ENCODE measurements at regions of chr2 and their contacts with region 1.

Region 1: DNA sequence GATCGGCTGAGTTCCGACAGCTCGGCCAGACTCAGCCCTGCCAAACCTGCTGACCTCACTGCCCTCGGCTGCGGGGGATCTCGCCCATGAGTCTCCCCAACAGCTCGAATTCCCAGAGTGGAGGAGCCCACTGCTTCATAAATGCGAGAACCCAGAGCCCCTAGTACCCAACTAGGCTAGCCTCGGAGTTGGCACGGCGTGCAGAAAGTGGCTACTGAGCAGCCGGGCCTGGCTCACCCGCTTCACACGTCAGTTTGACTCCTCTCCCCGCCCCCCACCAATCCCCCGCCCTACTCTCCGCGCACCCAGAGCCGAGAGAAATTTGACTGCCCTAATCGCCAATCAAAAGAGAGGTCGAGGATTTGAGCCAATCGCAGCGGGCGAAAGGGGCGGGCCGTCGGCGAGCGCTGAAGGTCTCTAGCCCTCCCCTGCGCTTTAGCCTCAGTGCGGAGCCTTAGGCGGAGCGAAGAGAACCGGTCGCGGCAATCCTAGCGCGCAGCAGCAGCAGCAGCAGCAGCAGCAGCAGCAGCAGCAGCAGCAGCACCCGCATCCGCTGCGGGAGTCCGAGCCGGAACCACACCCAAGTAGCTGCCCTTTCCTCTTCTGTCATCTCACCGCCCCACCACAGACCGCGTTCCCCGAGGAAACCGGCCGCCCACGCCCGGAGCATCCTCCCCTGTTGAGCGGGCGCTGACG is at the start of gene GLS:
- DNase-seq: peak; percentile 94 to 98 (median 97)
- H3K4me3 ChIP-seq: peak within 1 kb of the TSS; percentile 88 to 94
- H3K4me3 Mint-ChIP-seq: peak within 1 kb of the TSS; percentile 96 to 99 (median 98)
- H3K27ac ChIP-seq: peak within 1 kb of the TSS; percentile 93
- H3K27ac Mint-ChIP-seq: peak within 1 kb of the TSS; percentile 96 to 99 (median 99)
- H3K4me1 ChIP-seq: peaks cover 54% of the 10 kb centered on the region
- H3K4me1 Mint-ChIP-seq: peaks cover 33 to 72% (median 45%) of the 10 kb centered on the region in 4 donors
- H3K27me3 ChIP-seq: no peaks in the 10 kb centered on the region
- H3K27me3 Mint-ChIP-seq: no peaks in the 10 kb centered on the region
- total RNA-seq, gene GLS: 200 to 208 TPM

Region 2: GRCh38 chr2:190408538-190409271 is 471.8 kb before region 1 on chr2:
- CTCF ChIA-PET with region 1: no interaction called
- POLR2A ChIA-PET with region 1: interaction called, 15 read pairs
- intact Hi-C with region 1: loop called (anchors 2 kb)
- DNase-seq: peak; percentile 78 to 86 (median 84)
- H3K4me3 ChIP-seq: peak overlapping the region; percentile 67 to 78
- H3K4me3 Mint-ChIP-seq: peak overlapping the region; percentile 89 to 95 (median 92)
- H3K27ac ChIP-seq: peak overlapping the region; percentile 96
- H3K27ac Mint-ChIP-seq: peak overlapping the region; percentile 96 to 99 (median 98)
- H3K4me1 ChIP-seq: peaks cover 54% of the 10 kb centered on the region
- H3K4me1 Mint-ChIP-seq: peaks cover 37 to 52% (median 41%) of the 10 kb centered on the region in 4 donors
- H3K27me3 ChIP-seq: no peaks in the 10 kb centered on the region
- H3K27me3 Mint-ChIP-seq: no peaks in the 10 kb centered on the region

Region 3: DNA sequence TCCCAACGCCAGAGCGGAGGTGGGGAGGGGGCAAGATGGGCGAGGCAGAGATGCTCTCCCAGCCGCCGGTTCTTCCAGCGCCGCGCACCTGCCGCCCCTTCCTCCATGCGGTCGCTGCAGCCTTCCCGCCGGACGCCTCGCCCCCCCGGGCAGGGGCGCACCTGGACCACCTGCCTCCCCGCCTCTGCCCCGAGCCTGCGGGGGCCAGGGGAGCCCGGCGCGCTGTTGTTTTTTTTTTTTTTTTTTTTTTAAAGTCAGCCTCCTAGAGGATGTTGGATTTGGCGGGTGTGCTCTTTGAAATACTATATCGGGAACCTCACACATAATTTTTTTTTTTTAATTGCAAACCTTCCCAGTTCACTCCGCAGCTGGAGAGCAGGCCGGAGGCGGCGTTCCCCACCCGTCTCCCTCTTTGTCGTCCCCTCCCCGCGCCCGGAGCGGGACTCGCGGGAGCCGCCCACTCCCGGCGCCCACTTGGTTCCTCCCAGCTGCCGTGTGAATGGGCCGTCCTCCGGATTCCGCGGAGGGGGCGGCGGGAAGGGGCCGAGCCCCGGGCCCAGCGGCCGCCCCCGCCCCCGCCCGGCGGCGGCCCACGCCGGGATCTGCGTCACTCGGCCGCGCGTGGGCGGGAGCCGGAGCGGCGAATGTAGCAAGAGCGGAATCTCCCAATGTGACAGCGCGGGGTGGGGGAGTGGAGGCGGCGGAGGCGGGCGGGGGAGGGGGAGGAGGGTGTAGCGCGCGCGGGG is 232.1 kb before region 1 on chr2:
- CTCF ChIA-PET with region 1: interaction called, 3 read pairs
- POLR2A ChIA-PET with region 1: interaction called, 4 read pairs
- intact Hi-C with region 1: loop called (anchors 2 kb)
- DNase-seq: peak; percentile 91 to 94 (median 92)
- H3K4me3 ChIP-seq: peak overlapping the region; percentile 31 to 57
- H3K4me3 Mint-ChIP-seq: peak overlapping the region; percentile 78 to 91 (median 85)
- H3K27ac ChIP-seq: peak overlapping the region; percentile 72
- H3K27ac Mint-ChIP-seq: peak overlapping the region; percentile 90 to 96 (median 93)
- H3K4me1 ChIP-seq: peaks cover 38% of the 10 kb centered on the region
- H3K4me1 Mint-ChIP-seq: peaks cover 19 to 49% (median 29%) of the 10 kb centered on the region in 4 donors
- H3K27me3 ChIP-seq: no peaks in the 10 kb centered on the region
- H3K27me3 Mint-ChIP-seq: no peaks in the 10 kb centered on the region

Region 4: GRCh38 chr2:190858817-190859216 is 21.7 kb before region 1 on chr2:
- CTCF ChIA-PET with region 1: interaction called, 62 read pairs
- POLR2A ChIA-PET with region 1: interaction called, 48 read pairs
- intact Hi-C with region 1: no loop called
- DNase-seq: no peak
- H3K4me3 ChIP-seq: no peak overlapping the region
- H3K4me3 Mint-ChIP-seq: no peak overlapping the region
- H3K27ac ChIP-seq: no peak overlapping the region
- H3K27ac Mint-ChIP-seq: no peak overlapping the region
- H3K4me1 ChIP-seq: peaks cover 10% of the 10 kb centered on the region
- H3K4me1 Mint-ChIP-seq: peaks cover 10 to 17% (median 17%) of the 10 kb centered on the region in 4 donors
- H3K27me3 ChIP-seq: no peaks in the 10 kb centered on the region
- H3K27me3 Mint-ChIP-seq: peaks cover 0 to 1% of the 10 kb centered on the region in 2 donors

Region 5: GRCh38 chr2:190893157-190893556 is 12.6 kb after region 1 on chr2:
- CTCF ChIA-PET with region 1: interaction called, 11 read pairs
- POLR2A ChIA-PET with region 1: interaction called, 94 read pairs
- intact Hi-C with region 1: loop called (anchors 1 kb)
- DNase-seq: no peak
- H3K4me3 ChIP-seq: no peak overlapping the region
- H3K4me3 Mint-ChIP-seq: no peak overlapping the region
- H3K27ac ChIP-seq: no peak overlapping the region
- H3K27ac Mint-ChIP-seq: peak overlapping the region in 3 of 7 donors; percentile 31 to 66 (median 39)
- H3K4me1 ChIP-seq: peaks cover 58% of the 10 kb centered on the region
- H3K4me1 Mint-ChIP-seq: peaks cover 37 to 77% (median 52%) of the 10 kb centered on the region in 4 donors
- H3K27me3 ChIP-seq: no peaks in the 10 kb centered on the region
- H3K27me3 Mint-ChIP-seq: no peaks in the 10 kb centered on the region

Region 6: DNA sequence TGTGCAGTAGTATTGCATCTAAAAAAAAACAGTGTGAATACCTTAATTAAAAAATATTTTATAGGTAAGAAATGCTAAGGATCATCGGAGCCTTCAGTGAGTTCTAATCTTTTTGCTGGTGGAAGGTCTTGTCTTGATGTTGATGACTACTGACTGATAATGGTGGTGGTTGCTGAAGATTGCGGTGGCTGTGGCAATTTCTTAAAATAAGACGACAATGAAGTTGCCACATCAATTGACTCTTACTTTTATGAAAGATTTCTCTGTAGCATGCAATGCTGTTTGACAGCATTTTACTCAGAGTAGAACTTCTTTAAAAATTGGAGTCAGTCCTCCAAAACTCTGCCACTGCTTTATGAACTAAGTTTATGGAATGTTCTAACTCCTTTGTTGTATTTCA is 36.3 kb after region 1 on chr2:
- CTCF ChIA-PET with region 1: no interaction called
- POLR2A ChIA-PET with region 1: interaction called, 13 read pairs
- intact Hi-C with region 1: no loop called
- DNase-seq: peak in 1 of 5 donors; percentile 10
- H3K4me3 ChIP-seq: no peak overlapping the region
- H3K4me3 Mint-ChIP-seq: peak overlapping the region in 1 of 8 donors; percentile 20
- H3K27ac ChIP-seq: no peak overlapping the region
- H3K27ac Mint-ChIP-seq: peak overlapping the region in 1 of 7 donors; percentile 40
- H3K4me1 ChIP-seq: peaks cover 12% of the 10 kb centered on the region
- H3K4me1 Mint-ChIP-seq: peaks cover 22 to 36% (median 28%) of the 10 kb centered on the region in 4 donors
- H3K27me3 ChIP-seq: no peaks in the 10 kb centered on the region
- H3K27me3 Mint-ChIP-seq: no peaks in the 10 kb centered on the region

Region 7: DNA sequence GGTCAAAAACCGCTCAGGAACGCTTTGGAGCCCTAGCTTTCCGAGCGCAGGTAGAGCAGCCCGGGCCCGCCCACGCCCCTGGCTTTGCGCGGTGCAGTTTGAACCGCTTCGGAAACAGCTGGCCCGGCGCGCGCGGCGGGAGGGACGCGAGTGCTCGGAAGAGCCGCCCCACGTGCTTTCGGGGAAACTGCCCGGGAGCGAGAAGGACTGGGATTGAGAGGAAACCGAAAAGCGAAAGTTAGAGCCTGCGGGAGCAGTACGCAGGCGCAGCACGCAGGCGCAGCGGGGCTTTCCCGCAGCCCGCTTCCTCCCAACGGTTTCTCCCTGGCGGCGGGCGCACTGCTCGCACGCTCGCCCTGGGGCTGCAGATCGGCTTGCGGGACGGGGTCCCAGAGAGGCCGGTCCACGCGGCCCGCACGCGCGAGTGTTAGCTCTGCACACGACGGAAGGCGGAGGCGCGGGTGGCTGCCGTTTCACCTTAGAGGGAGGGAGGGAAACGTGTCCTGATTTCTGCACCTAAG is 139.8 kb after region 1 on chr2:
- CTCF ChIA-PET with region 1: interaction called, 5 read pairs
- POLR2A ChIA-PET with region 1: interaction called, 68 read pairs
- intact Hi-C with region 1: loop called (anchors 2 kb)
- DNase-seq: peak; percentile 91 to 97 (median 94)
- H3K4me3 ChIP-seq: peak overlapping the region; percentile 50 to 55
- H3K4me3 Mint-ChIP-seq: no peak overlapping the region
- H3K27ac ChIP-seq: peak overlapping the region; percentile 86
- H3K27ac Mint-ChIP-seq: no peak overlapping the region
- H3K4me1 ChIP-seq: peaks cover 76% of the 10 kb centered on the region
- H3K4me1 Mint-ChIP-seq: peaks cover 17 to 35% (median 30%) of the 10 kb centered on the region in 4 donors
- H3K27me3 ChIP-seq: no peaks in the 10 kb centered on the region
- H3K27me3 Mint-ChIP-seq: no peaks in the 10 kb centered on the region

Region 8: DNA sequence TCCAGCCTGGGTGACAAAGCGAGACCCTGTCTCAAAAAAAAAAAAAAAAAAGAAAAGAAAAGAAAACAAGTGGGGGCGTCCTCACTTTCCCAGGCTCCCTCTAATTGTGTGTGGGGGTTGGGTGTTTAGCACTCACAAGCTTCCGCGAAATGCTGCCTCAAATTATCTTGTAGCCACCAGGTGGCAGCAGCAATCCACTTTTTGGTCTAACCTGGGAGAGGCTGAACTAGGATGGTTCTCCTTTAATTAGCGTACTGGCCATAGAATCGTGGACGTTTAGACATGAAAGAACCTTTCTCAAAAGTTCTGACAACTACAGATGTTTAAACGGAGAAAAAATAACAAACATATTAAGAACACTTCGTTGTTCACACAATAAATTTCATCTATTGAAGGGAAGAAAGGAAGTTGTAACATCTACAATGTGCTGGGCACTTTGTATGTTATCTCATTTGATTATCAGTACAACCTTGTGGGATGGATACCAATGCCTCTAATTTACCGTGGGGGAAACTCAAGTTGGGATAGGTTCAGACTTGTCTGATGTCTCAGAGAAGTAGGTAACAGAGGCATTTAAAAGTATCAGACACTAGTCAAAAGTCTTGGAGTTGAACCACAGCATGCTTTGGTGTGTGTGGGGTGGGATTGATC is 674.7 kb after region 1 on chr2:
- CTCF ChIA-PET with region 1: no interaction called
- POLR2A ChIA-PET with region 1: no interaction called
- intact Hi-C with region 1: no loop called
- DNase-seq: peak; percentile 66 to 73 (median 70)
- H3K4me3 ChIP-seq: no peak overlapping the region
- H3K4me3 Mint-ChIP-seq: peak overlapping the region in 1 of 8 donors; percentile 34
- H3K27ac ChIP-seq: no peak overlapping the region
- H3K27ac Mint-ChIP-seq: no peak overlapping the region
- H3K4me1 ChIP-seq: no peaks in the 10 kb centered on the region
- H3K4me1 Mint-ChIP-seq: peaks cover 2 to 5% (median 3%) of the 10 kb centered on the region in 4 donors
- H3K27me3 ChIP-seq: peaks cover 3% of the 10 kb centered on the region
- H3K27me3 Mint-ChIP-seq: peaks cover 14 to 18% of the 10 kb centered on the region in 2 donors